Esophagus muscularis mucosa (tissue), 4 donors: ENCODE measurements at regions of chr1 and their contacts with region 1.

Region 1: GRCh38 chr1:40143891-40144575 is 17.2 kb upstream of the RLF start:
- DNase-seq: no peak
- H3K4me3 ChIP-seq: no peak overlapping the region
- H3K27ac ChIP-seq: no peak overlapping the region
- H3K4me1 ChIP-seq: peaks cover 0 to 3% (median 0%) of the 10 kb centered on the region in 4 donors
- H3K27me3 ChIP-seq: peaks cover 0 to 21% (median 0%) of the 10 kb centered on the region in 4 donors
- CTCF ChIP-seq: peak; percentile 71 to 82 (median 71)
- EP300 ChIP-seq: no peak
- POLR2A ChIP-seq: no peak

Region 2: DNA sequence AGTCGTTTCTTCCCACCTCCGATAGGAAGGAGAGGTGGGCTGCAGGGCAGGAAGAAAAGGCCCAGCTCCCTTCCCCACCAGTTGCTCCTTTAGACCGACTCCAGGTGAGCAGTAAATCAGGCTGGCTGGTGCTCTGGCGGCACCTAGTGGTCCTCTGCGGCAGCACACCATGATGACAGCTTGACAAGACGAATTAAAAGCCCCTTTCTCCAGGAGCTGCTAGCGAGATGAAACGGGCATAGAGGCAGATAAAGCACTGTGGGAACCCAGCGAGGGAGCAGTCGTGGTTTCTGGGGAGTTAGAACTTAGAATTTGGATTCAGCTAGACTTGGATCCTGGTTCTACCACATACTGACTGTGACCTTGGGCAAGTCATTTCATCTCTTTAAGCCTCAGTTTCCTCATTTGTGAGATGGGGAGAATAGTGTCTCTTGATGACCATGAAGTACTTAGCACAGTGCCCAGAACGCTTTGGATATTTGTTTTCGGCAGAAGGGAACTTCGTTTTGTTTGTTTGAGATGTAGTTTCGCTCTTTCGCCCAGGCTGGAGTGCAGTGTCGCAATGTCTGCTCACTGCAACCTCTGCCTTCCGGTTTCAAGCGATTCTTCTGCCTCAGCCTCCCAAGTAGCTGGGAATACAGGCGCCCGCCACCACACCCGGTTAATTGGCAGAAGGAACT is 194.9 kb after region 1 on chr1:
- intact Hi-C with region 1: loop called (anchors 1 kb)
- DNase-seq: peak; percentile 94
- H3K4me3 ChIP-seq: no peak overlapping the region
- H3K27ac ChIP-seq: no peak overlapping the region
- H3K4me1 ChIP-seq: peaks cover 0 to 11% (median 3%) of the 10 kb centered on the region in 4 donors
- H3K27me3 ChIP-seq: peaks cover 0 to 8% (median 0%) of the 10 kb centered on the region in 4 donors
- CTCF ChIP-seq: peak in 2 of 3 experiments; percentile 93 to 96
- EP300 ChIP-seq: no peak
- POLR2A ChIP-seq: no peak